Activated CD8-positive, alpha-beta T cell treated with anti-CD3 and anti-CD28 coated beads, Interleukin-2, amount 10 ng/mL, durations not matched to agents 7 days and 5 days (primary cell): ENCODE measurements at regions of chr14 and their contacts with region 1.

Region 1: GRCh38 chr14:74257078-74257989 is 18.1 kb downstream of the VSX2 start:
- DNase-seq: peak; percentile 62
- ATAC-seq: peak; percentile 92
- H3K4me3 Mint-ChIP-seq: peak overlapping the region; percentile 76
- H3K27ac Mint-ChIP-seq: no peak overlapping the region
- H3K4me1 Mint-ChIP-seq: peaks cover 9% of the 10 kb centered on the region
- H3K27me3 Mint-ChIP-seq: peaks cover 19% of the 10 kb centered on the region

Region 2: GRCh38 chr14:74109369-74109768 is 148.0 kb before region 1 on chr14:
- CTCF ChIA-PET with region 1: interaction called, 14 read pairs
- POLR2A ChIA-PET with region 1: no interaction called
- DNase-seq: no peak
- ATAC-seq: no peak
- H3K4me3 Mint-ChIP-seq: no peak overlapping the region
- H3K27ac Mint-ChIP-seq: no peak overlapping the region
- H3K4me1 Mint-ChIP-seq: peaks cover 4% of the 10 kb centered on the region
- H3K27me3 Mint-ChIP-seq: no peaks in the 10 kb centered on the region

Region 3: DNA sequence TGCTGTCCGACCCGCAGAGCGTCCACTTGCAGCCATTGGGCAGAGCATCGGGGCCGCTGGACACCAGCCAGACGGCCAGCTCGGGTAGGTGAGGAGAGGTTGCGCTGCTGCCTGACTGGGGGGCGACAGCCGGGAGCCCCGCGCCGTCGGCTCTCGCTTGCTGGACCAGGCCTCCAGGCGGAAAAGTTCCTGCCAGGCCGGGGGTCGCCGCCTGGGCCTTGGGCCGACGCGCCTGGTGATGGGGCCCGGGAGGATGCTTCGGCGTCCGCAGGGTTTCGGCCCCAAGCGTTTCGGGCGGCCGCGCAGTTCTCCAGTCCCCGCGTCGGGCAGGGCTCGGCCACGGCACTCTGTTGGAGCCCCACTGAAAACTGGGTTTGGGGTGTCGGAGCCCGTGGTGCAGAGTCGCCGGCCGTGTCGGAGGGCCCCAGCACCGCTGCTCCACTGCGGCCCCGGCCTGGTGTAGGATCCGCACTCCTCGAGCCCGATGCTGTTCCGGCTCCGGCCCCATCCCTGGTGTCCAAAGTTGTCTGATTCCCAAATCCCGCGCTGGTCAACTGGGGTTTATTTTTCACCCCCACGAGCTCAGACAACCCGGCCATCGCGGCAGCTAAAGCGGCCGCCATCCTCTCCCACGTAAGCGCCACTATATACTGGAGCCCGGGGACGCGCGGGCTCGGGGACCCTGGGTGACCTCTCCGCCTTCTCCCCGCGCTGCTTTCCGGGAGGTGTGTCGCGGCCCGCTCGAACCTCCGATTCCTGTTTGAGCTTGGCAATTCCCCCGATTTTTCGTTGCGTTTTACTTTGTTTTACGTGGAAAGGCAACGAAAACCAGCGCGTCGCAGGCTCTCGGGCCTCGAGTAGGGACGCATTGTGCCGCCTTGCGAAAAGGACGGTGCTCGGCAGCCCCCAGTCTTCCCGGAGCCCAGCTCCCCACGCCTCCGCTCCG is 17.2 kb before region 1 on chr14:
- CTCF ChIA-PET with region 1: interaction called, 10 read pairs
- POLR2A ChIA-PET with region 1: no interaction called
- DNase-seq: no peak
- ATAC-seq: no peak
- H3K4me3 Mint-ChIP-seq: peak overlapping the region; percentile 22
- H3K27ac Mint-ChIP-seq: no peak overlapping the region
- H3K4me1 Mint-ChIP-seq: peaks cover 13% of the 10 kb centered on the region
- H3K27me3 Mint-ChIP-seq: peaks cover 70% of the 10 kb centered on the region